OCI-LY7 (cell line): ENCODE measurements at regions of chr6 and their contacts with region 1.

Region 1: DNA sequence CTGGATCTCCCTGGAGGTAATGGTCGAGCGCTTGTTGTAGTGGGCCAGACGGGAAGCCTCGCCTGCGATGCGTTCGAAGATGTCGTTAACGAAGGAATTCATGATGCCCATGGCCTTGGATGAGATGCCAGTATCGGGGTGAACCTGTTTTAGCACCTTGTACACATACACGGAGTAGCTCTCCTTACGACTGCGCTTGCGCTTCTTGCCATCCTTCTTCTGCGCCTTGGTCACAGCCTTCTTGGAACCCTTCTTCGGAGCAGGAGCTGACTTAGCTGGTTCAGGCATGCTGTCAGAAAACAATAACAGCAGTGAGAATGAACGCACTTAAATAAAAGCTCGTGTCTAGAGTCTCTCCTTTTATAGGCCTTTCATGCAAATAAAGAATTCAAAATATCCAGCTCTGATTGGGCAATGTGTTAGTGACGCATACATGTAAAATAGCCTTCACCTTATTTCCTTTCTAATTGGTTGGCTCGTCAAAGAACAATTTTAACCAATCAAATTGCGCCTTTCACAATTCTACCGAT is 129.2 kb downstream of the HFE start:
- DNase-seq: peak; percentile 98
- H3K4me3 ChIP-seq: peak overlapping the region; percentile 79
- H3K27ac ChIP-seq: peak overlapping the region; percentile 99
- H3K4me1 ChIP-seq: peaks cover 63% of the 10 kb centered on the region
- CTCF ChIP-seq: no peak

Region 2: DNA sequence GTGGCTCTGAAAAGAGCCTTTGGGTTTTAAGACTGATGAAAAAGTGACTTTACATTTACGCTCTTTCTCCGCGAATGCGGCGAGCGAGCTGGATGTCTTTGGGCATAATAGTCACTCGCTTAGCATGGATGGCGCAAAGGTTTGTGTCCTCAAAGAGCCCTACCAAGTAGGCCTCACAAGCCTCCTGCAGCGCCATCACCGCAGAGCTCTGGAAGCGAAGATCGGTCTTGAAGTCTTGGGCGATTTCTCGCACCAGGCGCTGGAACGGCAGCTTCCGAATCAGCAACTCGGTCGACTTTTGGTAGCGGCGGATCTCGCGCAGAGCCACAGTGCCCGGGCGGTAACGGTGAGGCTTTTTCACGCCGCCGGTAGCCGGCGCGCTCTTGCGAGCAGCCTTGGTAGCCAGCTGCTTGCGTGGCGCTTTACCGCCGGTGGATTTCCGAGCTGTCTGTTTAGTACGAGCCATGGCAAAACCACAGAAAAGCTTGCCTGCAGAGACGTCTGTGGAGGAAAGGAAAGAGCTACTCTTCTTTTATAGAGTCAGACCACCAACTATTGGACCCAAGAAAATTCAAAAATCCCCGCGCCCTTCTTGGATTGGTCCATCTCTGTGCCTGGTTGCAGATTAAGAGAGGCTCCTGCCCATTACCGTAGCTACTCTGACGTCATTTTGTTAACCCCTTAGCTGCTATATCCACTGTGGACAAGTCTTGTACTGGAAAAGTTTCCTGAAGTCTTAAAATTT is 184.7 kb before region 1 on chr6:
- CTCF ChIA-PET with region 1: no interaction called
- POLR2A ChIA-PET with region 1: interaction called, 73 read pairs
- intact Hi-C with region 1: loop called (anchors 5 kb)
- DNase-seq: peak; percentile 99
- H3K4me3 ChIP-seq: peak overlapping the region; percentile 78
- H3K27ac ChIP-seq: peak overlapping the region; percentile 99
- H3K4me1 ChIP-seq: peaks cover 74% of the 10 kb centered on the region
- CTCF ChIP-seq: 0 out of 2 replicates have a peak, but pooled peaks have one; percentile 33

Region 3: DNA sequence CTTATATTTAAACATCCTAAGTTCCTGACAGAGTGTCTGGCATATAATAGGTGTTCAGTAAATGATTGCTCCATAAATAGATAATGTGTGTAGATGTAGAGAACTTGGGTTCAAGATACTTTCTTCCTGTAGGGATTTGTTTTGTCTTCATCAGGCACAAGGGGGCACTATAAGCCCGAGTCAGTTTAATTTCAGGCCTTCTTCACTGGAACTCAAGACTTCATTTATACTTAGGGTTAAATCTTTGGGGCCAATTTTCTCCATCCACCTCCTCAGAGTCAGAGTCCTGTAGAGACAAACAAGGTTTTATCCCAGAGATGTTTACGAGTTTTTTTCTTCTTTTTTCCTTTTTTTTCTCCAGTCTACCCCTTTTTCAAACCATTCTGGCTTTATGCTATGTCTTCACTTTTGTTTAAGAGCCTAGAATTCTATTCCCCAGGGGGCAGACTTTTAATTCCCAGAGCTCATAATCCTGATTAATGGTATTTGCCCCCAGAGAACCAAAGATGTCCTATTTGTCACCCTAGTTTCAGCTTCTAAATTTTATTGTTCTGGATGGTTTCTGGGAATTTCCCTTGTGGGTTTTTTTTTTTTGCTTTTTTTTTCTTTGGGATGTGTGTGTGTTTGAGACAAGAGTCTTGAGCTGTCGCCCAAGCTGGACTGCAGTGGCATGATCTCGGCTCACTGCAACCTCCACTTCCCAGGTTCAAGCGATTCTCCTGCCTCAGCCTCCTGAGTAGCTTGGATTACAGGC is 40.8 kb before region 1 on chr6:
- CTCF ChIA-PET with region 1: no interaction called
- POLR2A ChIA-PET with region 1: interaction called, 27 read pairs
- intact Hi-C with region 1: no loop called
- DNase-seq: peak; percentile 79
- H3K4me3 ChIP-seq: peak overlapping the region; percentile 74
- H3K27ac ChIP-seq: peak overlapping the region; percentile 94
- H3K4me1 ChIP-seq: peaks cover 30% of the 10 kb centered on the region
- CTCF ChIP-seq: peak; percentile 95

Region 4: DNA sequence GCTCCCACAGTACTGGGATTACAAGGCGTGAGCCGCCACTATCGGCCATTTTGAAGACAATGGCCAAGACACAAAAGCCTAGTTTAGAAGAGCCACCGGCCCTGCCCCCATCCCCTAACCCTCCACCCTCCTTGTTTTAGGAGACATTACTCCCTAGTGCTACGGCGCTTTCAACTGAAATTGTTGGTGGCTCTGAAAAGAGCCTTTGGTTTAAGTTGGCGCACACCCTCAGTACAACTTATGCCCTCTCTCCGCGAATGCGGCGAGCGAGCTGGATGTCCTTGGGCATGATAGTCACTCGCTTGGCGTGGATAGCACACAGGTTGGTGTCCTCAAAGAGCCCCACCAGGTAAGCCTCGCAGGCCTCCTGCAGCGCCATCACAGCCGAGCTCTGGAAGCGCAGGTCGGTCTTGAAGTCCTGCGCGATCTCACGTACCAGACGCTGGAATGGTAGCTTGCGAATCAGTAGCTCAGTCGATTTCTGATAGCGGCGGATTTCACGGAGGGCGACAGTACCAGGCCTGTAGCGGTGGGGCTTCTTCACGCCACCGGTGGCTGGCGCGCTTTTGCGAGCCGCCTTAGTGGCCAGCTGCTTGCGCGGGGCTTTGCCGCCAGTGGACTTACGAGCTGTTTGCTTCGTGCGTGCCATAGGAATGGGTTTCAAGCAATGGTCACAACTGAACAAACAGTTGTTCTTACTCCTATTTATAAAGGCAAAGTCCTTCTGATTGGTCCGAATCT is 33.7 kb after region 1 on chr6:
- CTCF ChIA-PET with region 1: no interaction called
- POLR2A ChIA-PET with region 1: interaction called, 11 read pairs
- intact Hi-C with region 1: no loop called
- DNase-seq: no peak
- H3K4me3 ChIP-seq: peak overlapping the region; percentile 23
- H3K27ac ChIP-seq: no peak overlapping the region
- H3K4me1 ChIP-seq: peaks cover 27% of the 10 kb centered on the region
- CTCF ChIP-seq: peak; percentile 30; the same call in 1 of the 2 replicates

Region 5: GRCh38 chr6:26537846-26538571 is 321.6 kb after region 1 on chr6 and contains the start of gene HMGN4:
- CTCF ChIA-PET with region 1: no interaction called
- POLR2A ChIA-PET with region 1: interaction called, 4 read pairs
- intact Hi-C with region 1: loop called (anchors 5 kb)
- DNase-seq: peak; percentile 93
- H3K4me3 ChIP-seq: peak within 1 kb of the TSS; percentile 97
- H3K27ac ChIP-seq: peak within 1 kb of the TSS; percentile 93
- H3K4me1 ChIP-seq: peaks cover 69% of the 10 kb centered on the region
- CTCF ChIP-seq: 0 out of 2 replicates have a peak, but pooled peaks have one; percentile 22
- total RNA-seq, gene HMGN4: 113 and 116 TPM in 2 replicates

Region 6: DNA sequence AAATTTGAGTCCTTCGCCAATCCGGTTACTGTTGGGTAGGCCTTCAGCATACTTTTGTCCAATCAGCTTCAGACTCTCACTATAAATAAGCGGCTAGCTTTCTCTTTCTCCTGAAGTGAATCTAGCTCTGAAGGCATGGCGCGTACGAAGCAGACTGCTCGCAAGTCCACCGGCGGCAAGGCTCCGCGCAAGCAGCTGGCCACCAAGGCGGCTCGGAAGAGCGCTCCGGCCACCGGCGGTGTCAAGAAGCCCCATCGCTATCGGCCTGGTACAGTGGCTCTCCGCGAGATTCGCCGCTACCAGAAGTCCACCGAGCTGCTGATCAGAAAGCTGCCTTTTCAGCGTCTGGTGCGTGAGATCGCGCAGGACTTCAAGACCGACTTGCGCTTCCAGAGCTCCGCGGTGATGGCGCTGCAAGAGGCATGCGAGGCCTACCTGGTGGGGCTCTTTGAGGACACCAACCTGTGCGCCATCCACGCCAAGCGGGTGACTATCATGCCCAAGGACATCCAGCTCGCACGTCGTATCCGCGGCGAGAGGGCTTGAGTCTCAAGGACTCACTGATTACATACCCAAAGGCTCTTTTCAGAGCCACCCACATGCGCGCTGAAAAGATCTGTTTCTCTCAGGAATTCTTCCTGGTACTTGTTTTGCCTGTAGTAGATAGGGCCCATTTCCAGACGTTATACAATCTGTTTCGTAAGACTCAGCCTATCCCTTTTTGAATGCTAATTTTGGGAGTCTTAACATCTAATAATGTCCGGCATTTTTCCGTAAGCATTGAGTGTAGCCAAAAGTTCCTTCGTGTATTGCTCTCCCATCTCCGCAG is 1593.7 kb after region 1 on chr6:
- CTCF ChIA-PET with region 1: no interaction called
- POLR2A ChIA-PET with region 1: interaction called, 25 read pairs
- intact Hi-C with region 1: no loop called
- DNase-seq: peak; percentile 96
- H3K4me3 ChIP-seq: peak overlapping the region; percentile 82
- H3K27ac ChIP-seq: peak overlapping the region; percentile 96
- H3K4me1 ChIP-seq: peaks cover 62% of the 10 kb centered on the region
- CTCF ChIP-seq: peak; percentile 12; the same call in 1 of the 2 replicates